Activated CD8-positive, alpha-beta memory T cell treated with anti-CD3 and anti-CD28 coated beads, Interleukin-2, amount 10 ng/mL, durations not matched to agents 7 days and 5 days (primary cell): ENCODE measurements at regions of chr6 and their contacts with region 1.

Region 1: DNA sequence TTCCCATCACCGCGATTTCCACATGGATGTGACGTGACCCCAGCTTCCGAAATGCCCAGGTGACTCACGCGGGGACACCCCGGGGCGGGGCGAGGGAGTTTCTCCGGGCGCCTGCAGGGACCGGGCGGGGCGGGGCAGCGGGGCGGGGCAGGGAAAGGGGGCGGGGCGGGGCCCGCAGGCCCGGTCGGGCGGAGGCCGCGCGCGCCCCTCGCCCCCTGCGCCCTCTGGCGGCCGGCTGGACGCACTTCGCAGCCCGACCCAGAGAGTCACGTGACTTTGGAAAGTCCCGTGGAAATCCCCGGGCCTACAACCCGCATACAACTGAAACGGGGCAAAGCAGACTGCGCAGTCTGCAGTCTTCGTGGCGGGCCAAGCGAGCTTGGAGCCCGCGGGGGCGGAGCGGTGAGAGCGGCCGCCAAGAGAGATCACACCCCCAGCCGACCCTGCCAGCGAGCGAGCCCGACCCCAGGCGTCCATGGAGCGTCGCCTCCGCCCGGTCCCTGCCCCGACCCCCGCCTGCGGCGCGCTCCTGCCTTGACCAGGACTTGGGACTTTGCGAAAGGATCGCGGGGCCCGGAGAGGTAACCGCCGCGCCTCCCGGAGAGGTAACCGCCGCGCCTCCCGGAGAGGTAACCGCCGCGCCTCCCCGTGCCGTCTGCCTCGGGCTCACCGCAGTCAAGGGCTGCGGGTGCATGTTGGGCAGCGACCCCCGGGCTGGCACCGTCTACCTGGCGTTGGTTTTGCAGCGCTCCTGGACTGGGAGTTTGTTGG is at the start of gene TNFAIP3:
- DNase-seq: peak; percentile 96
- ATAC-seq: peak; percentile 80
- H3K4me3 Mint-ChIP-seq: peak within 1 kb of the TSS; percentile 79
- H3K27ac Mint-ChIP-seq: peak within 1 kb of the TSS; percentile 93
- H3K4me1 Mint-ChIP-seq: peaks cover 42% of the 10 kb centered on the region
- H3K27me3 Mint-ChIP-seq: no peaks in the 10 kb centered on the region
- total RNA-seq, gene TNFAIP3: 86.7 to 225 TPM

Region 2: DNA sequence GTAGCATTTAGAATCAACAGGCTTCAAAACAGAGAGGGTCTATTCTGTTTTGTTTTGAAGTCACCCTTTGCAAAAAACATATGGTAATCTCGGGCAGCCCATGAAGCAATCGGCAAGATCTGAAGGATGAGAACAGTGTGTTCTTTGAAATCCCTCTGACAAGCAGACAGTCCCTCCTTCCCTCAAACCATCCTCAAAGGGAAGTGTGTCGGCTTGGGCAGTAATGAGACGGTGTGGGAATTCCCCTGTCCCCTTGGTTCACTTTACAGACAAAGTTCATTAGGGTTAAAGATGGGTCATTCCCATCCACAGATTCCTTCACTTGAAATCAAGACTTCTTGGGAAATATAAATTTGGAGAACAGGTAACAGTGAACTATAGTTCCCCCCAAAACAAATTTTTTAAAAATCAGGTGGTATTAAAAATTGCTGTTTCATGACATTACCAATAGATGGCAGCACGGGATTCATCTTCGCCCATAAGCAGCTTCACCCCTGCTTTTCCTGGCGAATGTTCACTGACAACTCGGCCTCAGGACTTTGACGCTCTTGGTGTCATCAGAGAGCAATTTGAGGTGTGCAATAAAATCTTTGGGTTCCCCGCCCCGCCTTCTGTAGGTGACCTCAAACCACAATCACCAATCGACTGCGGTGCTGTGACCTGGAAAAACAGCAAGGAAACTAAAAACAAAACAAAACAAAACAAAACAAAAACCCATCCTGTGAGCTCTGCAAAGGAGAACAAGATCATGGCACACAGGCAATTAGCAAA is 159.3 kb before region 1 on chr6:
- CTCF ChIA-PET with region 1: interaction called, 73 read pairs
- DNase-seq: peak; percentile 94
- ATAC-seq: peak; percentile 82
- H3K4me3 Mint-ChIP-seq: peak overlapping the region; percentile 59
- H3K27ac Mint-ChIP-seq: peak overlapping the region; percentile 90
- H3K4me1 Mint-ChIP-seq: peaks cover 71% of the 10 kb centered on the region
- H3K27me3 Mint-ChIP-seq: no peaks in the 10 kb centered on the region

Region 3: DNA sequence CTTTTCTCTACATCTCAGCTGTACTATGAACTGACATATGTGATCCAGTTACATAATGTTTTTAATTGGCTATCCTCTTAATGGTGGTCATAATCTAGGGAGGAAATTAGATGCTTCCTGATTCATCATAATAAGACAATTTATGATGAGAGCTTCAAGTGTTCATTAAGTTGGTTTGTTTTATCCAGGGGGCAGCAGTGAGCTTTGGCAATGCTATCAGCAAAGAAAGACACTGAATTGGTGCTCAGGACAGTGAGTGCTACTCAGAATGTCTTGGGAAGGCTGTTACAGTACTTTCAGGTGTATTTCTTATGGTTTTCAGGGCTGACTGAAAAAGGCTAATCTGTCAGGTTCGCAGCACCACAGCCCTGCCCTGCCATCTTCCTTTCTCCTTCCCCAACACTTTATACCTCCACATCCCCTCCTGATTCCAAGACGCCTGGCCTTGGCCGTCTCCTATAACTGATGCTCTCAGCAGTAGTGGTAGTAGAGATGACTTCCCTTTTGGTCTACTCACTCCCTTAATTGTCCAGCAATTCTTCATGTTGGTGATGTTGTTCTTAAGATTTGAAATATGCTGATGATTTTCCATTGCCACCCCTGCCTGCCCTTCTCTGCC is 67.0 kb before region 1 on chr6:
- CTCF ChIA-PET with region 1: interaction called, 195 read pairs
- DNase-seq: peak; percentile 77
- ATAC-seq: peak; percentile 90
- H3K4me3 Mint-ChIP-seq: no peak overlapping the region
- H3K27ac Mint-ChIP-seq: peak overlapping the region; percentile 62
- H3K4me1 Mint-ChIP-seq: peaks cover 55% of the 10 kb centered on the region
- H3K27me3 Mint-ChIP-seq: no peaks in the 10 kb centered on the region

Region 4: DNA sequence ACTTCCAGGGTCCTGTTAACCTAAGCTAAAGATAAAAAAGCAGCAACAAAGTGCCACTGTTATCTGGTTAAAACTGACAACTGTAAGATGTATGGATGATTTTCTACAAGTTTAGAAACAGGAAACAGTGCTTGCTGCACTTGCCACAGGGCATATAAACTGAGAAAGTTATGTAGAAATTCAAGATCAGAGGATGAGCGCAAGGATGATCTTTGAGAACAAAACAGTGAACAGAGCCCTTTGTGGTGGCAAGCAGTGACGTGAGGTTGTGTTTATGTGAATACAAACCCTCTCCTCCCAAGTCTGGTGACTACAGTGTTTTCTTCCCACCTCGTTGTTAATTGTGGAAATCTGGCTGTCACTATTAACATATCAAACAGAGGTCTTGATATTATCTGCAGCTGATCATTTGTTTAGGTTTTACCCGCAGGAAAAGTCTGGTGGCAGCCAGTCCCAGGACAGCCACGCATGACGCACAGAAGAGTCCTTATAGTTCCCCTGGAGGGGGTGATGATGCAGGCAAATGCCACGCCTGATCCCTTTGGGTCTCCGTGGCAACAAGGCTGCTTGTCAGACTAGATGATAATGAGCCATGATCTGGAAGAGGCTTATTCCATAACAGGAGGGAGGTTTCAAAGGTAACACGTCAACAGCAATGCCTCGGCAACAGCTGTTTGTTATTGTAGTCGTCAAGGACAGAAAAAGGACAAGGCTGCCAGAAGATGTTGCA is 43.1 kb before region 1 on chr6:
- CTCF ChIA-PET with region 1: interaction called, 11 read pairs
- DNase-seq: peak; percentile 83
- ATAC-seq: peak; percentile 79
- H3K4me3 Mint-ChIP-seq: peak overlapping the region; percentile 65
- H3K27ac Mint-ChIP-seq: peak overlapping the region; percentile 98
- H3K4me1 Mint-ChIP-seq: peaks cover 77% of the 10 kb centered on the region
- H3K27me3 Mint-ChIP-seq: no peaks in the 10 kb centered on the region

Region 5: DNA sequence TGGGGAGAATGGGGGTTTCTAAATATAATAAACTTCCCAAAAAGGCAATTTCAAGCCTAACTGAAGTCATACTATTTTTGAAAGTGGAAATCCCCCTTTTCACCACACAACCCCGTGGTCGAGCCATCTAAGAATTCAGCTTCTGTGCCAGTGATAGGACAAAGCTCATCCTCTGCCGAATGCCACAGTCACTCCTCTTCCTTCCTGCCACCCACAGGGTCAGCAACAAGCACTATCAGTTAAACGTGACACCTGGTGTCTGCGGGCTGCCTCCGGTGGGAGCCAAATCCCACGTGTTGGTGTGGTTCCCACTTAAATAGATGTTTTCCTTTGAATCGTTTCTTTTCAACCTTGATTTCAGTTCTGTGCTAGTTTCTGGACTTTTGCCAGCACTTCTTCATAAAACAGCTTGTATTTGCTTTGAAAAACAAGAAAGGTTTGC is 60.7 kb after region 1 on chr6:
- CTCF ChIA-PET with region 1: interaction called, 10 read pairs
- DNase-seq: peak; percentile 92
- ATAC-seq: peak; percentile 99
- H3K4me3 Mint-ChIP-seq: peak overlapping the region; percentile 55
- H3K27ac Mint-ChIP-seq: peak overlapping the region; percentile 87
- H3K4me1 Mint-ChIP-seq: peaks cover 41% of the 10 kb centered on the region
- H3K27me3 Mint-ChIP-seq: no peaks in the 10 kb centered on the region

Region 6: GRCh38 chr6:137975188-137975940 is 108.3 kb after region 1 on chr6:
- CTCF ChIA-PET with region 1: interaction called, 62 read pairs
- DNase-seq: peak; percentile 60
- ATAC-seq: peak; percentile 83
- H3K4me3 Mint-ChIP-seq: peak overlapping the region; percentile 69
- H3K27ac Mint-ChIP-seq: peak overlapping the region; percentile 91
- H3K4me1 Mint-ChIP-seq: peaks cover 57% of the 10 kb centered on the region
- H3K27me3 Mint-ChIP-seq: no peaks in the 10 kb centered on the region

Region 7: GRCh38 chr6:138001750-138002349 is 134.8 kb after region 1 on chr6:
- CTCF ChIA-PET with region 1: interaction called, 13 read pairs
- DNase-seq: peak; percentile 77
- ATAC-seq: no peak
- H3K4me3 Mint-ChIP-seq: no peak overlapping the region
- H3K27ac Mint-ChIP-seq: no peak overlapping the region
- H3K4me1 Mint-ChIP-seq: peaks cover 11% of the 10 kb centered on the region
- H3K27me3 Mint-ChIP-seq: peaks cover 3% of the 10 kb centered on the region

Region 8: GRCh38 chr6:138017166-138017757 is 150.2 kb after region 1 on chr6:
- CTCF ChIA-PET with region 1: no interaction called
- DNase-seq: no peak
- ATAC-seq: no peak
- H3K4me3 Mint-ChIP-seq: no peak overlapping the region
- H3K27ac Mint-ChIP-seq: no peak overlapping the region
- H3K4me1 Mint-ChIP-seq: no peaks in the 10 kb centered on the region
- H3K27me3 Mint-ChIP-seq: peaks cover 20% of the 10 kb centered on the region